MCF 10A (cell line): ENCODE measurements at regions of chrX and their contacts with region 1.

Region 1: GRCh38 chrX:2643880-2644279 is 47.2 kb upstream of the CD99 start:
- DNase-seq: no peak
- H3K4me3 Mint-ChIP-seq: no peak overlapping the region
- H3K27ac Mint-ChIP-seq: no peak overlapping the region
- H3K4me1 Mint-ChIP-seq: no peaks in the 10 kb centered on the region
- H3K27me3 Mint-ChIP-seq: no peaks in the 10 kb centered on the region
- CTCF ChIP-seq: no peak

Region 2: GRCh38 chrX:2811271-2811670 is 167.4 kb after region 1 on chrX:
- CTCF ChIA-PET with region 1: no interaction called
- POLR2A ChIA-PET with region 1: no interaction called
- intact Hi-C with region 1: loop called (anchors 1 kb)
- DNase-seq: no peak
- H3K4me3 Mint-ChIP-seq: no peak overlapping the region
- H3K27ac Mint-ChIP-seq: peak overlapping the region; percentile 88
- H3K4me1 Mint-ChIP-seq: no peaks in the 10 kb centered on the region
- H3K27me3 Mint-ChIP-seq: no peaks in the 10 kb centered on the region
- CTCF ChIP-seq: no peak